Right lobe of liver (tissue), 6 donors: ENCODE measurements at regions of chr3 and their contacts with region 1.

Region 1: GRCh38 chr3:155352900-155353490 is 59.5 kb upstream of the STRIT1 start:
- DNase-seq: no peak
- ATAC-seq: peak; percentile 61 to 77 (median 64)
- H3K4me3 ChIP-seq: no peak overlapping the region
- H3K27ac ChIP-seq: no peak overlapping the region
- H3K4me1 ChIP-seq: peaks cover 0 to 11% (median 5%) of the 10 kb centered on the region in 4 donors
- H3K27me3 ChIP-seq: no peaks in the 10 kb centered on the region
- CTCF ChIP-seq: peak; percentile 56 to 62 (median 60)
- POLR2A ChIP-seq: no peak

Region 2: GRCh38 chr3:155701882-155702465 is 349.0 kb after region 1 on chr3:
- intact Hi-C with region 1: loop called in 1 of 2 experiments (anchors 10 kb)
- DNase-seq: no peak
- ATAC-seq: peak; percentile 67 to 82 (median 72)
- H3K4me3 ChIP-seq: no peak overlapping the region
- H3K27ac ChIP-seq: no peak overlapping the region
- H3K4me1 ChIP-seq: no peaks in the 10 kb centered on the region
- H3K27me3 ChIP-seq: no peaks in the 10 kb centered on the region
- CTCF ChIP-seq: peak; percentile 70 to 76 (median 73)
- POLR2A ChIP-seq: no peak